Activated CD4-positive, alpha-beta T cell treated with anti-CD3 and anti-CD28 coated beads, Interleukin-2, amount 10 ng/mL, durations not matched to agents 24 days and 14 days (primary cell): ENCODE measurements at regions of chr11 and their contacts with region 1.

Region 1: GRCh38 chr11:128290106-128290840 is 297.1 kb downstream of the ETS1 start:
- DNase-seq: peak; percentile 94
- H3K4me3 Mint-ChIP-seq: peak overlapping the region; percentile 93
- H3K27ac Mint-ChIP-seq: peak overlapping the region; percentile 99
- H3K4me1 Mint-ChIP-seq: peaks cover 90% of the 10 kb centered on the region
- H3K27me3 Mint-ChIP-seq: no peaks in the 10 kb centered on the region

Region 2: GRCh38 chr11:128039140-128040021 is 250.9 kb before region 1 on chr11:
- intact Hi-C with region 1: loop called (anchors 2 kb)
- DNase-seq: peak; percentile 94
- H3K4me3 Mint-ChIP-seq: peak overlapping the region; percentile 73
- H3K27ac Mint-ChIP-seq: peak overlapping the region; percentile 94
- H3K4me1 Mint-ChIP-seq: peaks cover 41% of the 10 kb centered on the region
- H3K27me3 Mint-ChIP-seq: no peaks in the 10 kb centered on the region

Region 3: GRCh38 chr11:128226106-128226716 is 64.1 kb before region 1 on chr11:
- intact Hi-C with region 1: loop called (anchors 1 kb)
- DNase-seq: peak; percentile 58
- H3K4me3 Mint-ChIP-seq: peak overlapping the region; percentile 39
- H3K27ac Mint-ChIP-seq: peak overlapping the region; percentile 91
- H3K4me1 Mint-ChIP-seq: peaks cover 33% of the 10 kb centered on the region
- H3K27me3 Mint-ChIP-seq: no peaks in the 10 kb centered on the region

Region 4: GRCh38 chr11:128323381-128323780 is 33.1 kb after region 1 on chr11:
- intact Hi-C with region 1: loop called (anchors 1 kb)
- DNase-seq: peak; percentile 87
- H3K4me3 Mint-ChIP-seq: peak overlapping the region; percentile 69
- H3K27ac Mint-ChIP-seq: peak overlapping the region; percentile 97
- H3K4me1 Mint-ChIP-seq: peaks cover 79% of the 10 kb centered on the region
- H3K27me3 Mint-ChIP-seq: no peaks in the 10 kb centered on the region

Region 5: GRCh38 chr11:128497061-128497775 is 206.9 kb after region 1 on chr11:
- intact Hi-C with region 1: loop called (anchors 1 kb)
- DNase-seq: peak; percentile 77
- H3K4me3 Mint-ChIP-seq: peak overlapping the region; percentile 82
- H3K27ac Mint-ChIP-seq: peak overlapping the region; percentile 96
- H3K4me1 Mint-ChIP-seq: peaks cover 92% of the 10 kb centered on the region
- H3K27me3 Mint-ChIP-seq: no peaks in the 10 kb centered on the region

Region 6: DNA sequence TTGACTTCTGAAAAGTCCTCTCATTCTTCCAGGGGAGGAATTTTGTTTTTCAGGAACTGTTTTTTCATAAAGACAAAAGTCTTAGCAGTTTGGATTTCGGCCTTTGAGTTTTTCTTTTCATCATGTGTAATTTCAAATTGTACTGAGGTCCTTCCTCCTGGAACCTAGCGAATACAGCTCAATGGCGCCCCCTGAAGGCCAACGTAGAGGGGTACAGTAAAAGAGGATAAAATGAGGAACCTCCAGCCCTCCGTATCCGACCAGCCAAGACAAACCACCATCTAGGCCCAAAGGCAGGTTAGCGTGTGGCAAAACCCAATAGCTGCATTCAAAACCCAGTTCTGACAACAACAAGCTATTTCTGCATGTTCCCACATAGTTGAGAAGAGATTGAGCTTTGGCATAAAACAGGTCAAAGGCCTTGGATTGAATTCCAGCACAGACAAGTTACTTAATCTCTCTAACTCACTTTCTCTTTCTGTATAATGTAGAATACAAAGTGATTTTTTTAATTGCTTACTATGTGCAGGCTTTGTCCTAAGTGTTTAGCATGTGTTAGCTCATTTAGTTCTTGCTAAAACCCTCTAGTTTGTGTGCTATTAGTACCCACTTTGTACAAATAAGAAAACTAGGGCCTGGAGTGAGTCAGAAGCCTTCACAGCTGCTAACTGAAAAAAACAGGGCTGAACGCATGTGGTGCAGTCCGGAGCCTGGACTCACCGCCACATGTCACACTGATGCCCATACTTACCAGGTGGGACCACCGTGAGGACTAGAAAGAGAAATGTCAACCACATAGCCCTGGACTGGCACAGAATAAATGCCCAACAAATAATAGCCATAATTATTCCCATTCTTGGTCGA is 340.3 kb after region 1 on chr11:
- intact Hi-C with region 1: loop called (anchors 1 kb)
- DNase-seq: peak; percentile 96
- H3K4me3 Mint-ChIP-seq: peak overlapping the region; percentile 69
- H3K27ac Mint-ChIP-seq: peak overlapping the region; percentile 92
- H3K4me1 Mint-ChIP-seq: peaks cover 61% of the 10 kb centered on the region
- H3K27me3 Mint-ChIP-seq: no peaks in the 10 kb centered on the region

Region 7: DNA sequence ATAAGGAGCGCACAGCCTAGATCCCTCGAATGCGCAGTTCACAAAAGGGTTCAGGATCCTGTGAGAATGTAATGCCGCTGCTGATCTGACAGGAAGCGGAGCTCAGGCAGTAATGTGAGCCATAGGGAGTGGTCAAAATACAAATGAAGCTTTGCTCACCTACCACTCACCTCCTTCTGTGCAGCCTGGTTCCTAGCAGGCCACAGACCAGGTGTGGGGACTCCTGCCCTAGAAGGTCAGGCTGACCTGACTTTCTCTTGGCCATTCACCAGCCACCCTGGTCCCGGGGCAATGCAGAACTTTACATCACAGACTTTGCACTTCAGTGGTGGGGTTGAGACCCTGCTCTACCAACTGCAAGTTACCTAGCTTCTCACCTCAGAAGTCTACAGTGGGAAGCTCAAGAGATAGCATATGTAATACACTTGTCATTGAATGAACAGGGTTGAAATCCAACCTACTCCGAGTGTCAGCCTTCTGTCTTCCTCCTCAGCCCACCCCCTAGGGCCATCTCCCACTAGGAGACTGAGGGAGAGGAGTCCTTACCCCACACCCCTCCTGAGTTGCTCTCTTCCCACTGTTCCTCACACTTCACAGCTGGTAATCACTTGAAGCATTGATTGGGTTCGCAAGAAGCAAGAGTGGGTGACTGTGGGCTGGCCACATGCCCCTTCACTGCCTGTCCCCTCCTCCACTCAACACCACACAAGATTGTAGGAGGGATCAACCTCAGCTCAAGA is 578.7 kb after region 1 on chr11:
- intact Hi-C with region 1: loop called (anchors 5 kb)
- DNase-seq: peak; percentile 80
- H3K4me3 Mint-ChIP-seq: no peak overlapping the region
- H3K27ac Mint-ChIP-seq: no peak overlapping the region
- H3K4me1 Mint-ChIP-seq: no peaks in the 10 kb centered on the region
- H3K27me3 Mint-ChIP-seq: peaks cover 11% of the 10 kb centered on the region